ENCODE measurements at regions of chr3 and their contacts with region 1.

Region 1: GRCh38 chr3:63365671-63366070 is 87.6 kb downstream of the SYNPR start:
- DNase-seq: no peak
- H3K4me3 ChIP-seq: no peak overlapping the region
- H3K27ac ChIP-seq: no peak overlapping the region
- H3K4me1 ChIP-seq: no peaks in the 10 kb centered on the region
- CTCF ChIP-seq: no peak

Region 2: DNA sequence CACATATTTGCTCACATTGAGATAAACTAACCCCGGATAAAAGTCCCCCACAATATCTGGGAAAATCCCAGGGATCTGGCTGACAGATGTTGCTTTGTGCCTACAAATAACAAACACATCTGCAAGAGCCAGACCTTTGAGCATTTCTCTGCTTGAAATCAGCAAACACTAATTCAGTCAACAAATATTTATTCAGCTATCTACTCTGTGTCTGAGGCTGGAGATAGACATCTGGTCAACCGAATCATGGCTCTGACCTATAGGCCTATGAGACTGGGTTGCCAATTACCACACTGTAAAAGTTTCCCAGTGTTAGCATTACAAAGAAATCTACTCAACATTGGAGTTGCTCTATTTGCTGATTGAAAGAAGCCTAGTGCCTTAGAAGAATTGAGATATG is 289.3 kb before region 1 on chr3:
- CTCF ChIA-PET with region 1: no interaction called
- POLR2A ChIA-PET with region 1: interaction called, 11 read pairs
- intact Hi-C with region 1: no loop called
- DNase-seq: no peak
- H3K4me3 ChIP-seq: no peak overlapping the region
- H3K27ac ChIP-seq: no peak overlapping the region
- H3K4me1 ChIP-seq: no peaks in the 10 kb centered on the region
- CTCF ChIP-seq: no peak

Region 3: DNA sequence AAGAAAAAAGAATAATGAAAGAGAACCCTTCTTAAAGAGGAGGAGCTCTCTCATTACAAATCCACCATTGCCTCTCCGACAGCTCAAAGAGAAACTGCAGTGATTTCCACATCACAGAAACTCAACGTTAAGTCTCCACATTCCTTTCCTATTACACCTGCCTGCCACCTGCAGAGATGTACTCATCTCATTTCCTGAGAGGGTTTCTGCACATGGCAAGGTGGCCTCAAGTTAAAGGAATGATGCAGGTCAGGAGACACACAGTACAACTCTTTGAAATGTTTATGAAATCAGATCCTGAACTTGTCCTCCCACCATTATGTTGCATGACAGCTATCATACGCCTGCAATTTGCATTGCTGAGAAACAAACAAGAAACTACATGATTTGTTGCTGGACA is 1780.5 kb after region 1 on chr3:
- CTCF ChIA-PET with region 1: no interaction called
- POLR2A ChIA-PET with region 1: no interaction called
- intact Hi-C with region 1: no loop called
- DNase-seq: no peak
- H3K4me3 ChIP-seq: no peak overlapping the region
- H3K27ac ChIP-seq: no peak overlapping the region
- H3K4me1 ChIP-seq: no peaks in the 10 kb centered on the region
- CTCF ChIP-seq: no peak

Measured in OCI-LY7 (cell line).